ENCODE measurements at regions of chr12 and their contacts with region 1.

Region 1: GRCh38 chr12:69639400-69640016 is 28.8 kb upstream of the LRRC10 start:
- DNase-seq: peak; percentile 79
- ATAC-seq: peak; percentile 88
- H3K4me3 Mint-ChIP-seq: no peak overlapping the region
- H3K27ac Mint-ChIP-seq: no peak overlapping the region
- H3K4me1 Mint-ChIP-seq: no peaks in the 10 kb centered on the region
- H3K27me3 Mint-ChIP-seq: no peaks in the 10 kb centered on the region

Region 2: DNA sequence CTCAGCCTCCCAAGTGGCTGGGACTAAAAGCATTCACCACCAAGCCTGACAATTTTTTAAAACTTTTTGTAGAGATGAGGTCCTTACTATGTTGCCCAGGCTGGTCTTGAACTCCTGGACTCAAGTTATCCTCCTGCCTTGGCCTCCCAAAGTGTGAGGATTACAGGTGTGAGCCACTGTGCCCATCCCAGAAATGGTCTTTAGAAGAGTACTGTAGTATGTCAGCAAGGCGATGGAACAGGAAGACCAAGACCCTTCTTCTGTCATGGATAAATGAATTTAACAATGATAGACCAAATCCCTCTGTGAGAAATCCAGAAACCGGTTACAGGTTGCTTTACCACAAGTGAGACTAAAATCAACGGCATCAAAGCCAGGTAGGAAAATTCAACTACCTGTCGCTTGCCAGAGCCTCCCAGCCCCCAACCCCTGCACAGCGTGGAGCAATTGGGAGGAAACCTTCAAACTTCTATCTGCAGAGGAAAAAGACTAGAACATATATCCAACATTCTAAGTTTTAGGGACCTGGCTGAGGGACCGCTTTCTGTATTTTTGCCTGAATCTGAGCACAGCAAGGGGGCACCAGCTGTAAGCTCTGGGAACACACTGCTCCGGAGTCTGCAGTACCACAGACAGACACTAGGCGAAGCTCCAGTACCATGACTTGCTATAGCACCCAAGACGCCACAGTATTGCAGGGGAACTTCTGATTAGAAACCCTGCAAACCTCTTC is 348.8 kb before region 1 on chr12:
- CTCF ChIA-PET with region 1: interaction called, 4 read pairs
- POLR2A ChIA-PET with region 1: no interaction called
- intact Hi-C with region 1: loop called in 1 of 2 experiments (anchors 1 kb)
- DNase-seq: peak; percentile 88
- ATAC-seq: peak; percentile 100
- H3K4me3 Mint-ChIP-seq: no peak overlapping the region
- H3K27ac Mint-ChIP-seq: no peak overlapping the region
- H3K4me1 Mint-ChIP-seq: peaks cover 4% of the 10 kb centered on the region
- H3K27me3 Mint-ChIP-seq: peaks cover 19% of the 10 kb centered on the region